PC-9 (cell line): ENCODE measurements at regions of chr9 and their contacts with region 1.

Region 1: DNA sequence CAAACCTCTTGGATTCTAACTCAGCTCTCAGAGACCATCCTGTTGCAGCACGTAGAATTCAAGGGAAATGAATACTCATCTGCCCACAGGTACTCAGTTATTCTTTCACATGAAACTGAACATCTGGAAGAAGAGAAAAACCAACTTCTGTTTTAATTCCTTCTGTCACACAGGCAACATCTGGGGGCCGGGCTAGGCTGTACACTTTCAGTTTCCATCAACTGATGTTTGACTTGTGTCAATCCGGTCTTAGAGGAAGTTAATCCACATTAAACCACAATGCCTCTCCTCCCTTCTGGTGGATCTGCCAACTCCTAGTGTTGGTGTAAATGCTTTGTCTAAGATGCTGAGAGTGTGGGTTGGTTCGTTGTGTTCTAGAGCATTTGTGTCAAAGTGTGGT is 17.6 kb downstream of the DMRT3 start:
- DNase-seq: no peak
- H3K4me3 ChIP-seq: no peak overlapping the region
- H3K27ac ChIP-seq: no peak overlapping the region
- H3K4me1 ChIP-seq: no peaks in the 10 kb centered on the region
- H3K27me3 ChIP-seq: peaks cover 20% of the 10 kb centered on the region
- CTCF ChIP-seq: no peak

Region 2: GRCh38 chr9:214648-215493 is 779.1 kb before region 1 on chr9 and contains the start of gene DOCK8:
- CTCF ChIA-PET with region 1: interaction called, 11 read pairs
- POLR2A ChIA-PET with region 1: no interaction called
- intact Hi-C with region 1: no loop called
- DNase-seq: peak; percentile 37 to 52
- H3K4me3 ChIP-seq: peak within 1 kb of the TSS; percentile 72
- H3K27ac ChIP-seq: no peak within 1 kb of the TSS
- H3K4me1 ChIP-seq: no peaks in the 10 kb centered on the region
- H3K27me3 ChIP-seq: no peaks in the 10 kb centered on the region
- CTCF ChIP-seq: no peak; the same call in 1 of the 2 replicates
- total RNA-seq, gene DOCK8: 7.5 and 8.1 TPM in 2 replicates